Activated naive CD4-positive, alpha-beta T cell treated with anti-CD3 and anti-CD28 coated beads for 36 hours (primary cell): ENCODE measurements at regions of chr2 and their contacts with region 1.

Region 1: GRCh38 chr2:159712143-159712928 is at the start of gene MARCHF7:
- DNase-seq: peak; percentile 98
- H3K4me3 Mint-ChIP-seq: peak within 1 kb of the TSS; percentile 99
- H3K27ac Mint-ChIP-seq: peak within 1 kb of the TSS; percentile 100
- H3K4me1 Mint-ChIP-seq: peaks cover 44% of the 10 kb centered on the region
- H3K27me3 Mint-ChIP-seq: no peaks in the 10 kb centered on the region
- total RNA-seq, gene MARCHF7: 81.5 to 82.4 TPM

Region 2: GRCh38 chr2:157857881-157858280 is 1854.5 kb before region 1 on chr2:
- CTCF ChIA-PET with region 1: no interaction called
- intact Hi-C with region 1: loop called (anchors 5 kb)
- DNase-seq: no peak
- H3K4me3 Mint-ChIP-seq: no peak overlapping the region
- H3K27ac Mint-ChIP-seq: no peak overlapping the region
- H3K4me1 Mint-ChIP-seq: peaks cover 37% of the 10 kb centered on the region
- H3K27me3 Mint-ChIP-seq: no peaks in the 10 kb centered on the region

Region 3: GRCh38 chr2:158968396-158969161 is 743.8 kb before region 1 on chr2 and contains the start of gene TANC1:
- CTCF ChIA-PET with region 1: no interaction called
- intact Hi-C with region 1: loop called (anchors 1 kb)
- DNase-seq: peak; percentile 85
- H3K4me3 Mint-ChIP-seq: peak within 1 kb of the TSS; percentile 80
- H3K27ac Mint-ChIP-seq: no peak within 1 kb of the TSS
- H3K4me1 Mint-ChIP-seq: peaks cover 14% of the 10 kb centered on the region
- H3K27me3 Mint-ChIP-seq: peaks cover 50% of the 10 kb centered on the region
- total RNA-seq, gene TANC1: 2.0 to 2.3 TPM

Region 4: DNA sequence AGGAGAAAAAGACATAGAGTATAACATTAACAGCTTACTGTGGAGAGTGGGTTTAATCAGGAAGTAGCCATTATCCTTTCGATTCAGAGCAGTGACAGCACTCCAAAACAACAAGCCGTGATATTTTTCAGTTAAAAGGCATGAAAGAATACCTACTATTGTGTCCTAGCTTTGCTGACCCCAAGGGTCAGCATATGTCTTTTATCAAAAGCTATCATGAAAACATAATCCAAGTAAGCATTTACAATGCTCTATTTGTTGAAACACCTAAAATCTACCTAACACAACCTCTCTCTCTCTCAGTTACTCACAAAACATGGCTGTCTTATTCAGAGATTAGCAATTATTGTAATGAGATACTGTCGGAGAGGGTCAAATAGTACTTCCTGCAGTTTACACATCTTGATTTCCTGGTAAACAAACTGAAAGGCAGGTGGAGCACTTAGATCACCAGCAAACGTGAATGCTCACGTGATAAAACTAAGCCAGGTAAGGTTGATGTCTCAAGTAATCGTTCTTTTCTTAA is 196.0 kb before region 1 on chr2:
- CTCF ChIA-PET with region 1: no interaction called
- intact Hi-C with region 1: loop called (anchors 1 kb)
- DNase-seq: peak; percentile 23
- H3K4me3 Mint-ChIP-seq: peak overlapping the region; percentile 66
- H3K27ac Mint-ChIP-seq: peak overlapping the region; percentile 54
- H3K4me1 Mint-ChIP-seq: peaks cover 17% of the 10 kb centered on the region
- H3K27me3 Mint-ChIP-seq: no peaks in the 10 kb centered on the region

Region 5: DNA sequence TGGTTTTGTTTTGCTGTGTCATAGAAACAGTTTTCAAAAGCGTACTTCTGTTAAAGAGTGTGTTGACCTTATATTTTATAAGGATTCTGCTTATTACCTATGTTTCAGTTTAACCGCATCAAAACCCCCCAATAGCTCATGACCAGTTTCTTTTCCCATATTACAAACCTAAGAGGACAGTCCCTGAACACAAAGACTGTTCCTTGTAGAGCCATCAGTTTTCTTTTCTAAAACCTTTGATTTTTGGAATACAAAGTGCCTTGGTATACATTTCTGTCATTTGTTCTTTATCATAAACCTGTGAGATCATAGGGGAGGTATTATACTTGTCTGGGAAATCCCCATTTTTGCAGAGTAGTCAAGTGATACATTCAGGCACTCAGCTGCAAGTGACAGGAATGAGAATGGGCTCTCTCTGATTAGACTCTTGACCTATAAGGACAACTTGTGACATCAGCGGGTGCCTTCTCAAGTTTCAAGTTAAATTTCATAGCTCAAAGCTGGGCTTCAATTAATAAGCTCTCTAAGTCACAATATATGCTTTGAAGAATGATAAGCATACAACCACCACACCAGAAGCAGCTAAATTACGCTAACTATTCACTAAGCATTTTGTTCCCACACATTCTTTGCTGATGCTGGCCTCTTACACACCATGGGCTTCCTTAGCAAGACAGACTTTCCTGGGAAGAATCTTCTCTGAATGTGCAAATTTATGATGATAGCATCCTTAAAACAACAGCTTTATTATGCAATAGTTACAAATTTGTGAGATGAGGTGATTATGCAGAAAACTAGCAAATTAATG is 183.1 kb after region 1 on chr2:
- CTCF ChIA-PET with region 1: no interaction called
- intact Hi-C with region 1: loop called (anchors 1 kb)
- DNase-seq: peak; percentile 66
- H3K4me3 Mint-ChIP-seq: no peak overlapping the region
- H3K27ac Mint-ChIP-seq: peak overlapping the region; percentile 84
- H3K4me1 Mint-ChIP-seq: peaks cover 91% of the 10 kb centered on the region
- H3K27me3 Mint-ChIP-seq: no peaks in the 10 kb centered on the region

Region 6: DNA sequence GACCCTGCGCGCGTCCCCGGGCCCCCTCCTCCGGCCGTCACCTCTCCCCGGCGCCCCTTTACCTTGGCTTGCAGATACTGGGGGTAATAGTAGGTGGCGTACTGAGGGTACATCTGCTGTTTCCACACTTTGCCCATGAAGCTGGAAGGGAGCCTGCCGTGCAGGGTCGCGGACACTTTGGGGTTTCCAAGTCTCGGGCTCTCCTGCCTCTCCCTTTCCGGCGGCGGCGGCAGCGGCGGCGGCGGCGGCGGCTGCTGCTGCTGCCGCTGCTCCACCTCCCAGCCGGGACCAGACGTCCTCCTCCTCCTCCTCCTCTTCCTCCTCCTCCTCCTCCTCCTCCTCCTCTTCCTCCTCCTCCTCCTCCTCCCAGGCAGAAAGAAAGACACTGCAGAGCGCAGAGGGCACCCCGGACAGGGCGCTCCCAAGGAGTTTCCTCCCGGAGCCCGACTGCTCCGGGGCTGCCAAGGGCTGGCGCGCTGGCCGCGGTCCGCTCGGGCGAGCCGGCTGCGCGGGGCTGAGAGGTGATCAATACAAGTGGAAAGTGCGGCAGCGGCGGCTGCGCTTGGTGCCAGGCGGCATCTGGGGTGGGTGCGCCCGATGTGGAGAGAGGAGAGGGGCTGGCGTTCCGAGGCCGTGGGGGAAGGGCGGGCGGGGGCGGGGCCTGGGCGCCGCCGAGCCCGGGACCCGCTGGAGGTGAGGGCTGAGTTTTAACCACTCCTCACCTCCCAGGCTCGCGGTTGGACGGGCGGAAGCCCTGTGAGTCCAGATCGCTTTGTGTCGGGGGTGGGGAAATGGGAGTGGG is 781.1 kb after region 1 on chr2 and contains the start of gene RBMS1:
- CTCF ChIA-PET with region 1: no interaction called
- intact Hi-C with region 1: loop called (anchors 10 kb)
- DNase-seq: peak; percentile 58
- H3K4me3 Mint-ChIP-seq: peak within 1 kb of the TSS; percentile 93
- H3K27ac Mint-ChIP-seq: peak within 1 kb of the TSS; percentile 93
- H3K4me1 Mint-ChIP-seq: peaks cover 43% of the 10 kb centered on the region
- H3K27me3 Mint-ChIP-seq: no peaks in the 10 kb centered on the region
- total RNA-seq, gene RBMS1: 27.8 to 29.1 TPM